MCF 10A (cell line): ENCODE measurements at regions of chr15 and their contacts with region 1.

Region 1: GRCh38 chr15:89893696-89894455 is at the start of gene AP3S2:
- DNase-seq: peak; percentile 94
- H3K4me3 Mint-ChIP-seq: peak within 1 kb of the TSS; percentile 98
- H3K27ac Mint-ChIP-seq: peak within 1 kb of the TSS; percentile 97
- H3K4me1 Mint-ChIP-seq: no peaks in the 10 kb centered on the region
- H3K27me3 Mint-ChIP-seq: no peaks in the 10 kb centered on the region
- CTCF ChIP-seq: no peak
- total RNA-seq, gene AP3S2: 38.4 and 39.5 TPM in 2 replicates

Region 2: DNA sequence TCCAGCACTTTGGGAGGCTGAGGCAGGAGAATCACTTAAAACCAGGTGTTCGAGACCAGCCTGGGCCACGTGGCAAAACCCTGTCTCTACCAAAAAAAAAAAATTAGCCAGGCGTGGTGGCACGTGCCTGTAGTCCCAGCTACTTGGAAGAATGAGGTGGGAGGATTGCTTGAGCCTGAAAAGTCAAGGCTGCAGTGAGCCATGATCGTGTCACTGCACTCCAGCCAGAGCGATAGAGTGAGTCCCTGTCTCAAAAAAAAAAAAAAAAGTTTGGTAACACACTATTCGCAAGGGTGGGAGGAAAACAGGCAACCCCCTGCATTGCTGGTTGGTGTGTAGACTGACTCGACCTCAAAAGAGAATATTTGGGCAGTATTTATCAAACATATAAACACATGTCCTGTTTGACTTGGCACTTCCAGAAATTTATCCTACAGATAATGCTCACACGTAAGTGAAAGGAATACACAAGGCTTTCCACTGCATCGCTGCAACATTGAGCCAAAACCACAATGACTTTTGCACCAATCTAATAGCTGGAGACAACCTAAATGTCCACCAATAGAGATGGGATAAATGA is 76.1 kb before region 1 on chr15:
- CTCF ChIA-PET with region 1: no interaction called
- POLR2A ChIA-PET with region 1: no interaction called
- intact Hi-C with region 1: no loop called
- DNase-seq: no peak
- H3K4me3 Mint-ChIP-seq: no peak overlapping the region
- H3K27ac Mint-ChIP-seq: no peak overlapping the region
- H3K4me1 Mint-ChIP-seq: peaks cover 25% of the 10 kb centered on the region
- H3K27me3 Mint-ChIP-seq: no peaks in the 10 kb centered on the region
- CTCF ChIP-seq: no peak

Region 3: DNA sequence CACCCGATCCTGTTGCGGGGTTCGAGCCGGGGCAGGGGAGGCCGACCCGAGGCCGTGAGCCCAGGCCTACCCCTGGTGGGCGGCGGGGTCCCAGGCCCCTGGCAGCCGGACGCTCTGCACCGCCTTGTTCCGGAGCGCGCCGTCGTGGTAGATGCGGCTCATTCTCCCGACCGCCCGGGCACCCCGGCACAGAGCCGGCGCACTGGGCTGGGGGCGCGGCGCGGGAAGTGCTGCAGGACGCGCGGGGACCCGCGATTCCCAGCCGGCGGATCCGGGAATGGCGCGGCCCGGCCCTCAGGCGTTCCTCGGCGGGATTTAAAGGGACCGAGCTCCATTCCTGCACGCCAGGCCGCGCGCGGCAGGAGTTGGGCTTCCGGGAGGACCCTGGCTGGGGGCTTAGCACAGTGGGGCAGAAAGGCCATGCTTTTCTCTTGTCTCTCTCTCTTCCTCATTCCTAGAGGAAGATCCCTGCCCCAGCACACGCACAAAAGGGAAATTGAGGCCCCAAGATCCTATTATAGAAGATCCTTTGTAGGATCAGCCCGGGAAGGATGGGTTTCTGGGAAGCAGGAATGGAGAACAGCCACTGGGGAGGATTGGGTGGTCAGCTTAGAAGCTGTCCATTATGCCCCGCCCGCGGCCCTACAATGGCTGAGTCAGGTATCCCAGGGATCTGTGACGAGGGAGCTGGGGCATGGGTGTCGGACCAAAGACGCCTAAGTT is 19.0 kb after region 1 on chr15 and contains the start of gene ARPIN:
- CTCF ChIA-PET with region 1: interaction called, 22 read pairs
- POLR2A ChIA-PET with region 1: interaction called, 28 read pairs
- intact Hi-C with region 1: no loop called
- DNase-seq: peak; percentile 52
- H3K4me3 Mint-ChIP-seq: peak within 1 kb of the TSS; percentile 76
- H3K27ac Mint-ChIP-seq: no peak within 1 kb of the TSS
- H3K4me1 Mint-ChIP-seq: peaks cover 27% of the 10 kb centered on the region
- H3K27me3 Mint-ChIP-seq: no peaks in the 10 kb centered on the region
- CTCF ChIP-seq: no peak
- total RNA-seq, gene ARPIN: 7.1 and 9.9 TPM in 2 replicates

Region 4: DNA sequence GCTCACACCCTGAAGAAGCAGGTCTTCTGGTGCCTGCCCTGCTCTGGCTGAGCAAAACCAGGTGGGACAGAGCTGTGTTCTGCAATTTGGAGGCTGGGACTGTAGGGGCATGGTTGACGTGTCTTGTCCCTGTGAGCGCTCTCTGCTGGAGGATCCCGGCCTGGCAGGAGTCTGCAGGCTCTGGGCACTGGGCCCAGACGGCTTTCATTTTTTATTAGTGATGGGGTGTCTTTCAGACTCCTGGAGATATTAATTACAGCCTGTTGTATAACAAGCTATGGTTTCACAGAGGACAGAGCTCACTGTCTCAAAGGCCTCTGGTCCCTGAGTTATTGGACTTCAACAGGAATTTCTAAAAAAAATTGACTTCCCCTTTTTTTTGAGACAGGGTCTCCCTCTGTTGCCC is 77.7 kb after region 1 on chr15:
- CTCF ChIA-PET with region 1: interaction called, 10 read pairs
- POLR2A ChIA-PET with region 1: interaction called, 4 read pairs
- intact Hi-C with region 1: loop called (anchors 1 kb)
- DNase-seq: peak; percentile 76
- H3K4me3 Mint-ChIP-seq: no peak overlapping the region
- H3K27ac Mint-ChIP-seq: no peak overlapping the region
- H3K4me1 Mint-ChIP-seq: no peaks in the 10 kb centered on the region
- H3K27me3 Mint-ChIP-seq: no peaks in the 10 kb centered on the region
- CTCF ChIP-seq: peak; percentile 52

Region 5: GRCh38 chr15:90013503-90013937 is 119.6 kb after region 1 on chr15:
- CTCF ChIA-PET with region 1: interaction called, 10 read pairs
- POLR2A ChIA-PET with region 1: interaction called, 7 read pairs
- intact Hi-C with region 1: no loop called
- DNase-seq: no peak
- H3K4me3 Mint-ChIP-seq: no peak overlapping the region
- H3K27ac Mint-ChIP-seq: peak overlapping the region; percentile 43
- H3K4me1 Mint-ChIP-seq: peaks cover 34% of the 10 kb centered on the region
- H3K27me3 Mint-ChIP-seq: no peaks in the 10 kb centered on the region
- CTCF ChIP-seq: no peak

Region 6: GRCh38 chr15:90086868-90087268 is 193.0 kb after region 1 on chr15:
- CTCF ChIA-PET with region 1: interaction called, 100 read pairs
- POLR2A ChIA-PET with region 1: interaction called, 21 read pairs
- intact Hi-C with region 1: loop called (anchors 1 kb)
- DNase-seq: peak; percentile 76
- H3K4me3 Mint-ChIP-seq: no peak overlapping the region
- H3K27ac Mint-ChIP-seq: no peak overlapping the region
- H3K4me1 Mint-ChIP-seq: no peaks in the 10 kb centered on the region
- H3K27me3 Mint-ChIP-seq: no peaks in the 10 kb centered on the region
- CTCF ChIP-seq: peak; percentile 83